Endothelial cell of umbilical vein (primary cell): ENCODE measurements at regions of chr4 and their contacts with region 1.

Region 1: GRCh38 chr4:158172261-158173258 is at the start of gene GASK1B:
- DNase-seq: peak; percentile 91
- H3K4me3 ChIP-seq: peak within 1 kb of the TSS; percentile 24 to 94 (median 53)
- H3K27ac ChIP-seq: peak within 1 kb of the TSS; percentile 59
- H3K4me1 ChIP-seq: peaks cover 28% of the 10 kb centered on the region
- H3K27me3 ChIP-seq: no peaks in the 10 kb centered on the region
- CTCF ChIP-seq: peak; percentile 50 to 57
- POLR2A ChIP-seq: no peak
- total RNA-seq, gene GASK1B: 235 and 238 TPM in 2 replicates

Region 2: GRCh38 chr4:157514711-157515110 is 657.8 kb before region 1 on chr4:
- CTCF ChIA-PET with region 1: no interaction called
- POLR2A ChIA-PET with region 1: no interaction called
- dilution Hi-C with region 1: no loop called
- intact Hi-C with region 1: loop called (anchors 10 kb)
- DNase-seq: no peak
- H3K4me3 ChIP-seq: no peak overlapping the region
- H3K27ac ChIP-seq: no peak overlapping the region
- H3K4me1 ChIP-seq: no peaks in the 10 kb centered on the region
- H3K27me3 ChIP-seq: no peaks in the 10 kb centered on the region
- CTCF ChIP-seq: peak; percentile 38 to 57
- POLR2A ChIP-seq: no peak

Region 3: GRCh38 chr4:157992038-157992705 is 180.4 kb before region 1 on chr4:
- CTCF ChIA-PET with region 1: interaction called, 29 read pairs
- POLR2A ChIA-PET with region 1: no interaction called
- dilution Hi-C with region 1: no loop called
- intact Hi-C with region 1: loop called (anchors 1 kb)
- DNase-seq: peak; percentile 92
- H3K4me3 ChIP-seq: peak overlapping the region; percentile 12 to 61 (median 21)
- H3K27ac ChIP-seq: peak overlapping the region; percentile 32
- H3K4me1 ChIP-seq: peaks cover 37% of the 10 kb centered on the region
- H3K27me3 ChIP-seq: no peaks in the 10 kb centered on the region
- CTCF ChIP-seq: peak; percentile 36 to 41
- POLR2A ChIP-seq: no peak

Region 4: GRCh38 chr4:158033416-158034120 is 139.0 kb before region 1 on chr4:
- CTCF ChIA-PET with region 1: interaction called, 14 read pairs
- POLR2A ChIA-PET with region 1: no interaction called
- dilution Hi-C with region 1: no loop called
- intact Hi-C with region 1: loop called (anchors 1 kb)
- DNase-seq: peak; percentile 96
- H3K4me3 ChIP-seq: peak overlapping the region in 1 of 3 experiments; percentile 11
- H3K27ac ChIP-seq: peak overlapping the region; percentile 85
- H3K4me1 ChIP-seq: peaks cover 29% of the 10 kb centered on the region
- H3K27me3 ChIP-seq: no peaks in the 10 kb centered on the region
- CTCF ChIP-seq: no peak
- POLR2A ChIP-seq: no peak

Region 5: GRCh38 chr4:158209825-158210807 is 37.6 kb after region 1 on chr4 and contains the start of gene TMEM144:
- CTCF ChIA-PET with region 1: interaction called, 7 read pairs
- POLR2A ChIA-PET with region 1: no interaction called
- dilution Hi-C with region 1: no loop called
- intact Hi-C with region 1: loop called (anchors 2 kb)
- DNase-seq: peak; percentile 93
- H3K4me3 ChIP-seq: peak within 1 kb of the TSS; percentile 23 to 59 (median 24)
- H3K27ac ChIP-seq: peak within 1 kb of the TSS; percentile 67
- H3K4me1 ChIP-seq: peaks cover 15% of the 10 kb centered on the region
- H3K27me3 ChIP-seq: no peaks in the 10 kb centered on the region
- CTCF ChIP-seq: no peak
- POLR2A ChIP-seq: peak; percentile 44
- total RNA-seq, gene TMEM144: 23.0 and 23.9 TPM in 2 replicates